CD4-positive, alpha-beta T cell (primary cell): ENCODE measurements at regions of chr1 and their contacts with region 1.

Region 1: DNA sequence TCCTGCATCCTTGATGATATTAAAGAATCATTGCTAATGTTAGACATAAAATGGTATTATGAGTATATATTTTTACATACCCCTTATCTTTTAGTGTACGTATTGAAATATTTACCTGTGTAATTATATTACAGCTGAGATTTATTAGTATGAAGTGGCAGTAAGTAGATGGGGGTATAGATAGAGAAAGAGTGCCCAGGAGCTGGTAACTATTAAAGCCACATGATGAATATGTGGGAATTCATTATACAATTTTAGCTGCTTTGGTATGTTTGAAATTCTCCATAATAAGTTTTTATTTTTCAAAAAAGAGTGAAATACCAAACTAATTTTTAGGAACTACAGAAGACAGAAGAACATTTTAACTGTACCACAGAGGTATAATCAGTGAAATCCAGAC is 339.0 kb downstream of the PLPP3 start:
- DNase-seq: no peak
- ATAC-seq: no peak
- H3K4me3 ChIP-seq: no peak overlapping the region
- H3K4me3 Mint-ChIP-seq: no peak overlapping the region
- H3K27ac ChIP-seq: no peak overlapping the region
- H3K27ac Mint-ChIP-seq: no peak overlapping the region
- H3K4me1 ChIP-seq: no peaks in the 10 kb centered on the region
- H3K4me1 Mint-ChIP-seq: no peaks in the 10 kb centered on the region
- H3K27me3 ChIP-seq: no peaks in the 10 kb centered on the region
- H3K27me3 Mint-ChIP-seq: no peaks in the 10 kb centered on the region
- CTCF ChIP-seq: no peak

Region 2: GRCh38 chr1:56255516-56256152 is 15.2 kb after region 1 on chr1:
- CTCF ChIA-PET with region 1: no interaction called
- POLR2A ChIA-PET with region 1: no interaction called
- intact Hi-C with region 1: loop called in 1 of 2 experiments (anchors 2 kb)
- DNase-seq: no peak
- ATAC-seq: no peak
- H3K4me3 ChIP-seq: no peak overlapping the region
- H3K4me3 Mint-ChIP-seq: no peak overlapping the region
- H3K27ac ChIP-seq: no peak overlapping the region
- H3K27ac Mint-ChIP-seq: no peak overlapping the region
- H3K4me1 ChIP-seq: no peaks in the 10 kb centered on the region
- H3K4me1 Mint-ChIP-seq: no peaks in the 10 kb centered on the region
- H3K27me3 ChIP-seq: no peaks in the 10 kb centered on the region
- H3K27me3 Mint-ChIP-seq: no peaks in the 10 kb centered on the region
- CTCF ChIP-seq: no peak

Region 3: DNA sequence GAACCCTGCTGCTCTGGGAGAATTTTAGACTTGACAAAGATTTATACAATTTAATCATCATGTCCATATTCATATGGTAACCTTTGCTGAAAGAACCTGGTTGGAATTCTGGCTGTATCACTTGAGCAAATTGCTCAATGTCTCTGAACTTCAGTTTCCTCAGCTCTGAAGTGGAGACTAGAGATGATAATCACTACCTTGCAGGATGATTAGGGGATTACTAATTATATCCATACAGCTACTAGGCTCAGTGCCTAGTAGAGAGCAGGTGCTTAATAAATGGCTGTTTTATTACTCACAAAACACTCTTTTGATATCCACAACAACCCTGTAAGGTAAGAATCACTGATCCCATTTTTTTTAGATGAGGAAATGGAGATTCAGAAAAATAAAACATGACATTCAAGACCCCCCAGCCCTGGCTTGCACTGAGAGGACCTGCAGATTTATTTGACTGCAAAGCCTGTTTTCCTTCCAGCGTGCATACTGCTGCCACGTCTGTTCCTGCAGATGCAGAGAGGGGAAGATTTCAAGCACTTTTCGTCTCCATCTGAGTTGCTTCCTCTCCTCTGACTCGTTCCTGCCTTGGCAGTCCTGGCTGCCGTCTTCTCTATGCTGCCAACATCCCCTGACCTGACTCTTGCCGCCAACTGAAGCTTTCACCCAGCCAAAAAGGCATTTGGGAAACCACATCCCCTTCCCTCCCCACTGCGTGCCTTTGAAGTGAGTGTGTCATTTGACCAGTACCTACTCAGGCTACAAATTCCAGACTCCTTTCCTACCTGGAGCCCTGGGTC is 136.0 kb after region 1 on chr1:
- CTCF ChIA-PET with region 1: no interaction called
- POLR2A ChIA-PET with region 1: no interaction called
- intact Hi-C with region 1: no loop called
- DNase-seq: no peak
- ATAC-seq: no peak
- H3K4me3 ChIP-seq: no peak overlapping the region
- H3K4me3 Mint-ChIP-seq: no peak overlapping the region
- H3K27ac ChIP-seq: no peak overlapping the region
- H3K27ac Mint-ChIP-seq: no peak overlapping the region
- H3K4me1 ChIP-seq: no peaks in the 10 kb centered on the region
- H3K4me1 Mint-ChIP-seq: no peaks in the 10 kb centered on the region
- H3K27me3 ChIP-seq: no peaks in the 10 kb centered on the region
- H3K27me3 Mint-ChIP-seq: no peaks in the 10 kb centered on the region
- CTCF ChIP-seq: no peak